SK-N-SH (cell line): ENCODE measurements at regions of chr2 and their contacts with region 1.

Region 1: DNA sequence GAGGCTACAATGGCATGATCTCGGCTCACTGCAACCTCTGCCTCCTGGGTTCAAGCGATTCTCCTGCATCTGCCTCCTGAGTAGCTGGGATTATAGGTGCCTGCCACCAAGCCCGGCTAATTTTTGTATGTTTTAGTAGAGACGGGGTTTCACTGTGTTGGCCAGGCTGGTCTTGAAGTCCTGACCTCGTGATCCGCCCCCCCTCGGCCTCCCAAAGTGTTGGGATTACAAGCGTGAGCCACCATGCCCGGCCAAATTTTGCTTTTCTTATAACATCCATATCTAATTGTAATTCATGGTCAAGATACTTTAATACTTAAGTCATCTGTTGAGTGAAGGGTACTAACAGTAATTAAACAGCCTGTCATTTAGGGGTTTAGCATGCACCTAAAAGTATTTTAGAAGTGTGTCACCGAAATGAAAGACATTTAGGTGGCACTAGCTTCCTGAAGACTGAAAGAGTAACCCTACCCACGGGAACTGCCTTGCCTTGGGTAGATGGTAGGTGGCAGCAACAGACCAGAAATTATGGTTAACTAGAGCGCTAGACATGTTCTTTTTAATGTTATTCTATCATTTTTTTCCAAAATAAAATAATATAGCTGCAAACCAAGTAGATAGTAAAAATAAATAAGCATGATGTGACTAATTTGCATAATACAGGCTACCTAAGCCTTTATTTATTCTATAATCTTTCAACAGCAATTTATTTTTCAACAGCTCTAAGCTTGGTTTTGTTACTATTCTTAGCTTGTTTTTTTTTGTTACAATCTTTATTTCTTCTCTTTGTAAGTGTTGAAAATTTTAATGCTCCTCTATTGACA is 8.6 kb upstream of the ACYP2 start:
- DNase-seq: peak; percentile 59
- H3K4me3 ChIP-seq: no peak overlapping the region; a peak in 1 of 4 replicates
- H3K27ac ChIP-seq: peak overlapping the region; percentile 6 to 97; a peak in 3 of 4 replicates
- H3K4me1 ChIP-seq: peaks cover 8 to 34% of the 10 kb centered on the region in 2 experiments
- H3K27me3 ChIP-seq: no peaks in the 10 kb centered on the region
- CTCF ChIP-seq: peak; percentile 88
- EP300 ChIP-seq: no peak
- RAD21 ChIP-seq: peak; percentile 93

Region 2: GRCh38 chr2:53114582-53114981 is 992.3 kb before region 1 on chr2:
- CTCF ChIA-PET with region 1: no interaction called
- POLR2A ChIA-PET with region 1: no interaction called
- DNase-seq: no peak
- H3K4me3 ChIP-seq: no peak overlapping the region
- H3K27ac ChIP-seq: no peak overlapping the region
- H3K4me1 ChIP-seq: no peaks in the 10 kb centered on the region
- H3K27me3 ChIP-seq: no peaks in the 10 kb centered on the region; the same call in 1 of the 2 replicates
- CTCF ChIP-seq: no peak
- EP300 ChIP-seq: no peak
- RAD21 ChIP-seq: no peak

Region 3: GRCh38 chr2:53939656-53940055 is 167.2 kb before region 1 on chr2:
- CTCF ChIA-PET with region 1: no interaction called
- POLR2A ChIA-PET with region 1: no interaction called
- DNase-seq: no peak
- H3K4me3 ChIP-seq: no peak overlapping the region
- H3K27ac ChIP-seq: no peak overlapping the region
- H3K4me1 ChIP-seq: peaks cover 0 to 2% of the 10 kb centered on the region in 2 experiments; a peak in 3 of 4 replicates
- H3K27me3 ChIP-seq: no peaks in the 10 kb centered on the region
- CTCF ChIP-seq: no peak
- EP300 ChIP-seq: no peak
- RAD21 ChIP-seq: no peak

Region 4: GRCh38 chr2:54021702-54022101 is 85.1 kb before region 1 on chr2:
- CTCF ChIA-PET with region 1: no interaction called
- POLR2A ChIA-PET with region 1: no interaction called
- DNase-seq: no peak
- H3K4me3 ChIP-seq: no peak overlapping the region
- H3K27ac ChIP-seq: no peak overlapping the region
- H3K4me1 ChIP-seq: no peaks in the 10 kb centered on the region
- H3K27me3 ChIP-seq: no peaks in the 10 kb centered on the region
- CTCF ChIP-seq: no peak
- EP300 ChIP-seq: no peak
- RAD21 ChIP-seq: no peak

Region 5: GRCh38 chr2:54522624-54523281 is 415.9 kb after region 1 on chr2:
- CTCF ChIA-PET with region 1: interaction called, 23 read pairs
- POLR2A ChIA-PET with region 1: no interaction called
- DNase-seq: peak; percentile 60
- H3K4me3 ChIP-seq: no peak overlapping the region
- H3K27ac ChIP-seq: no peak overlapping the region
- H3K4me1 ChIP-seq: peaks cover 3 to 34% of the 10 kb centered on the region in 2 experiments; a peak in 3 of 4 replicates
- H3K27me3 ChIP-seq: no peaks in the 10 kb centered on the region
- CTCF ChIP-seq: peak; percentile 68
- EP300 ChIP-seq: no peak
- RAD21 ChIP-seq: peak; percentile 79

Region 6: GRCh38 chr2:54558188-54559005 is 451.6 kb after region 1 on chr2:
- CTCF ChIA-PET with region 1: interaction called, 11 read pairs
- POLR2A ChIA-PET with region 1: no interaction called
- DNase-seq: peak; percentile 87
- H3K4me3 ChIP-seq: peak overlapping the region; percentile 68 to 73
- H3K27ac ChIP-seq: peak overlapping the region; percentile 94 to 95
- H3K4me1 ChIP-seq: peaks cover 15 to 23% of the 10 kb centered on the region in 2 experiments
- H3K27me3 ChIP-seq: no peaks in the 10 kb centered on the region
- CTCF ChIP-seq: no peak
- EP300 ChIP-seq: peak in 1 of 2 experiments; percentile 32; a peak in 1 of 4 replicates
- RAD21 ChIP-seq: no peak

Region 7: DNA sequence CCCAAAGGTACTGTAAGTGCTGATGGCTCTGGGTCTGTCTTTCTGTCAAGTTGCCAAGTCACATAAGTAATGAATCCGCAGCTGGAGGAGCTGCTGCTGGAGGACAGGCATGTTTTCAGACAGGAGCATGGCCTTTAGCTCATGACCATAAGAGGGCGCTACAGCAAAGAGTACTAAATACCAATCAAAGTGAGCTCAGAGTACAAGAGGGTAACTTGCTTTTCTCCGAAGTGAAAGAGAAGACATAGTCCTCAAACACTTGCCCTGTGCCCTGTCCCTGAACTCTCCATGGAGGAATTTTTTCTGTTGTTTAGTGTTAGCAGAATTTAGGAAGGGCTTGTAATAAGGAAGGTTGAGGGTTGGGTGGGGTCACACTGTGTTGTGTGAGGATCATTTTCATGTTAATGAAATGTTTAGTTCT is 558.6 kb after region 1 on chr2:
- CTCF ChIA-PET with region 1: interaction called, 15 read pairs
- POLR2A ChIA-PET with region 1: no interaction called
- DNase-seq: peak; percentile 48
- H3K4me3 ChIP-seq: no peak overlapping the region; a peak in 1 of 4 replicates
- H3K27ac ChIP-seq: peak overlapping the region; percentile 34 to 73; a peak in 3 of 4 replicates
- H3K4me1 ChIP-seq: peaks cover 2 to 31% of the 10 kb centered on the region in 2 experiments; a peak in 3 of 4 replicates
- H3K27me3 ChIP-seq: no peaks in the 10 kb centered on the region
- CTCF ChIP-seq: peak; percentile 71
- EP300 ChIP-seq: no peak
- RAD21 ChIP-seq: peak; percentile 53

Region 8: DNA sequence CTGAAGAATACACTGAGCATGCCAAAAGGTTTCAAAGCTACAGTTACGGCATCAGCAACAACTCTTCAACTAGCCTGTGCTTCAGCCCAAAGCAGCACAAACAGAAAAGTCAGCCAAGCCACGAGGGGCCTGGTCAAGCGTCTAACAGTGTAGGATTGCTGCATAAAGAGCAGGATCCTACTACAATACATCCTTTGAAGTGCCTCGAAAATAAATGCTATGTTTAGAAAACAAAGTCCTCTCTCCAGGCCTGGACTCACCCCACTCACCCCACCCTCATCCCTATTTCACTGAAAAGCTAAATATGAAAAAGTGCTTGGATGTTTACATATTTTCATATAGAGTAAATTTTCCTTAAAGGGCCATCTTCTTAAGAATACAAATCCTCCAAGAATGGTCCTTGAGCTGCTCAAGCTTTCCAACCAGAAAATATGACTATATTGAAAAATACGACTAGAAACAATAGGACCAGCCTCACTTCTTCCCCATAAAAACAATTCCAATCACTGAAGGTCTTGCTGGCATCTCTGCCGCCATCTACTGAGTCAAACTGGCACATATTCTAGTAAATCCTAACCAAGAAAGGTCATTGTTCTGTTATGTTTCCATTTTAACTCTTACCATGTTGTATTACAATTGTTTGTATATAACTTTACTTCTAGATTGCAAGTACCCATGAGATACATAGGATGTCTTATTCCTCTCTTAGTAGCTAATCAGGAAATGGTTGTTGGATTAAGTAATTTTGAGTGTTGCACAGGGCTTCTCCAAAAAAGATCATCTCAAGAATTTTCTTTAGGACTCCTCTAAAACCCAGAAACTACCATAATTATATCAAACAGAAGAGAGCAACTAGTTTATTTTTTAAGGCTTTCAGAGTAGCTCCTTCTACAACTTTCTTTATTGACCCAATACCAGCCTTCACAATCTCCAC is 1061.6 kb after region 1 on chr2:
- CTCF ChIA-PET with region 1: interaction called, 19 read pairs
- POLR2A ChIA-PET with region 1: no interaction called
- DNase-seq: peak; percentile 52
- H3K4me3 ChIP-seq: peak overlapping the region in 1 of 2 experiments; percentile 6; a peak in 1 of 4 replicates
- H3K27ac ChIP-seq: peak overlapping the region; percentile 64 to 76
- H3K4me1 ChIP-seq: peaks cover 15 to 36% of the 10 kb centered on the region in 2 experiments
- H3K27me3 ChIP-seq: no peaks in the 10 kb centered on the region
- CTCF ChIP-seq: peak; percentile 90
- EP300 ChIP-seq: peak in 1 of 2 experiments; percentile 32; a peak in 1 of 4 replicates
- RAD21 ChIP-seq: peak; percentile 96